ENCODE measurements at regions of chr14 and their contacts with region 1.

Region 1: DNA sequence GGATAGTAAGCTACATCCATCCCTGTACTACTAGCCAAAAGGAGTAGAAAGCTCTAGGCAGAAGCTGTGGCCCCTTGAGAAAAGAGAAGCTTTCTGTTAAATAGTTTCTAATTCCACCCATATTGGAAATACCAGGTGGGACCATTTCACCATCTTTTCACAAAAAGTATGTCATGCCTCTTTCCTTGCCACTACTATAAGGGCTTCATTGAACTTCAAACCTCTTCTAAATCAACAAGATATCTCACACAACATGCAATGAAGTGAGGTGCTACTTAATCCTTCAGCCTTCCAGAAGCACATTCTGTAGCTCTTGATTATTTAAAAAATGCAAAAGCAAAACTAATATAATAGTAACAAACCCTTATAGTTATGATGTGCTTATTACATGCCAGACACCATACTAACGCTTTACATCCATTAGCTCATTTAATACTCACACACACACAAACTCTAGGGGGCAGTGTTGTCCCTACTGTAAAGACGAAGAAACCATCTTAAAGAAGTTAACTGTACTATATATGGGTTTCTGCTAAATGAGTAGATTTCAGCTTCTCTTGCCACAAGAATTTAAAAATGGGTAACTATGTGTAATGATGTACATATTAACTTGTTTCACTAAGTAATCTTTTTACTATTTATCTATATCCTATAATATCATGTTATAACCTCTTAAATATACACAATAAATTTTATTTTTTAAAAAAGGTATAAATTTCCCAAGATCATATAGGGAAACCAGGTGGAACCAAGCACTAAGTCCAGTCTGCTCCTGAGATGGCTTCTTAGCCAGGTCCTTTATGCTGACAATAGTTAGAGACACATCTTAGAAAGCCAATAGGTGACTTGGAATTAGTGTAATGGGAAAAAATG is 124.4 kb downstream of the RPS29 start:
- H3K4me3 Mint-ChIP-seq: no peak overlapping the region
- H3K27ac Mint-ChIP-seq: no peak overlapping the region
- H3K4me1 Mint-ChIP-seq: no peaks in the 10 kb centered on the region
- H3K27me3 Mint-ChIP-seq: no peaks in the 10 kb centered on the region

Region 2: GRCh38 chr14:49497725-49498348 is 36.1 kb after region 1 on chr14:
- intact Hi-C with region 1: loop called (anchors 1 kb)
- H3K4me3 Mint-ChIP-seq: no peak overlapping the region
- H3K27ac Mint-ChIP-seq: no peak overlapping the region
- H3K4me1 Mint-ChIP-seq: peaks cover 5% of the 10 kb centered on the region
- H3K27me3 Mint-ChIP-seq: no peaks in the 10 kb centered on the region